Ovary (tissue), 10 donors: ENCODE measurements at regions of chr3 and their contacts with region 1.

Region 1: DNA sequence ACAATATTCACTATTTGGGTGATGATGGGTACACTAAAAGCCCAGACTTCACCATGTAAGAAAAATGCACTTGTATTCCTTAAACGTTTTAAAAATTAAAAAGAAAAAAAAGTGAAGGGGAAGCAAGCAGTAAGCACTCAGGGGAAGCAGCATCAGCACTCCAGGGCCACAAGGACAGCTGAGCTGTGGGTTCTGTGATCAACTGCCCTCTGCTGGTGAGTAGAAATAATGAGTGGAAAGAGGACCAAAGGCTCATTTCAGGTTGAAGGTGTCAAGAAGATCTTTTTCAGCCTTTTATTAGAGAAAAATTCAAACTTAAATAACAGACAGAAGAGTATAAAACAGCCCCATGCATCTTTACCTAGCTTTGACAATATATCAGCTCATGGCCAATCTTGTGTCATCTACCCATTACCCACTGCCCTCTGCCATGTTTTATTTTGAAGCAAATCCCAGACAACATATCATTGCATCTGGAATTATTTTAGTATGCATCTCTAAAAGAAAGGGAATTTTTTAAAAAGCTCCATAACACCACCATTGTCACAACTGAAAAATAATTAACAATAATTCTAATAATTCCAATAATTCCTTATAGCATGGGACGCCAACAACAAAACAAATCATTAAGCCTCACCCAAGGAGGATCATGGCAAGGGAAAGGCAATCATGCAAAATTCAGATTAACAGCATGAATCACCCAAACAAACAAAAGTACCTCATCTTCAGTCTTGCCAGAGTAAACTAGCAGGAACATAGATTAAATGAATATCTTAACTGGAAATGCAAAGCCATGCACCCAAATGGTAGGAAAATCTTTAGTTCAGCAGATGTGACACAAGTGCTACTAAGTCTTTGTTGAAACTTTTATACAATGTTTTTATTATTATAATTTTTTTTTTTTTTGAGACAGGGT is 42.5 kb downstream of the TAMM41 start:
- DNase-seq: peak in 2 of 5 donors; percentile 35 to 39
- H3K4me3 ChIP-seq: no peak overlapping the region
- H3K27ac ChIP-seq: no peak overlapping the region
- H3K4me1 ChIP-seq: peaks cover 2% of the 10 kb centered on the region
- H3K27me3 ChIP-seq: no peaks in the 10 kb centered on the region
- CTCF ChIP-seq: peak; percentile 41 to 53 (median 41)
- EP300 ChIP-seq: no peak
- POLR2A ChIP-seq: no peak

Region 2: DNA sequence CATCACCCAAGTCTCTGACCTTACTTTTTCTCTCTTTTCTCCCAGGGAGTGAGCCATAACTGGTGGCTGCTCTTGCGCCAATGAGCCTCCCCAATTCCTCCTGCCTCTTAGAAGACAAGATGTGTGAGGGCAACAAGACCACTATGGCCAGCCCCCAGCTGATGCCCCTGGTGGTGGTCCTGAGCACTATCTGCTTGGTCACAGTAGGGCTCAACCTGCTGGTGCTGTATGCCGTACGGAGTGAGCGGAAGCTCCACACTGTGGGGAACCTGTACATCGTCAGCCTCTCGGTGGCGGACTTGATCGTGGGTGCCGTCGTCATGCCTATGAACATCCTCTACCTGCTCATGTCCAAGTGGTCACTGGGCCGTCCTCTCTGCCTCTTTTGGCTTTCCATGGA is 545.3 kb before region 1 on chr3:
- intact Hi-C with region 1: loop called in 1 of 4 experiments (anchors 5 kb)
- DNase-seq: no peak
- H3K4me3 ChIP-seq: no peak overlapping the region
- H3K27ac ChIP-seq: no peak overlapping the region
- H3K4me1 ChIP-seq: no peaks in the 10 kb centered on the region
- H3K27me3 ChIP-seq: no peaks in the 10 kb centered on the region
- CTCF ChIP-seq: no peak
- EP300 ChIP-seq: no peak
- POLR2A ChIP-seq: no peak

Region 3: GRCh38 chr3:11651900-11652299 is 152.3 kb before region 1 on chr3:
- intact Hi-C with region 1: loop called in 2 of 4 experiments (anchors 10 kb)
- DNase-seq: no peak
- H3K4me3 ChIP-seq: no peak overlapping the region
- H3K27ac ChIP-seq: no peak overlapping the region
- H3K4me1 ChIP-seq: no peaks in the 10 kb centered on the region
- H3K27me3 ChIP-seq: no peaks in the 10 kb centered on the region
- CTCF ChIP-seq: peak in 2 of 3 donors; percentile 33 to 55
- EP300 ChIP-seq: no peak
- POLR2A ChIP-seq: no peak

Region 4: GRCh38 chr3:11735638-11736037 is 68.6 kb before region 1 on chr3:
- intact Hi-C with region 1: no loop called
- DNase-seq: no peak
- H3K4me3 ChIP-seq: no peak overlapping the region
- H3K27ac ChIP-seq: no peak overlapping the region
- H3K4me1 ChIP-seq: no peaks in the 10 kb centered on the region
- H3K27me3 ChIP-seq: no peaks in the 10 kb centered on the region
- CTCF ChIP-seq: no peak
- EP300 ChIP-seq: no peak
- POLR2A ChIP-seq: no peak